B cell (primary cell): ENCODE measurements at regions of chr3 and their contacts with region 1.

Region 1: GRCh38 chr3:32467333-32468070 is 35.1 kb downstream of the CMTM6 start:
- DNase-seq: peak; percentile 87
- ATAC-seq: peak; percentile 78
- H3K4me3 ChIP-seq: peak overlapping the region in 4 of 5 experiments; percentile 49 to 64 (median 58)
- H3K4me3 Mint-ChIP-seq: peak overlapping the region; percentile 77
- H3K27ac ChIP-seq: peak overlapping the region; percentile 70
- H3K27ac Mint-ChIP-seq: peak overlapping the region; percentile 85
- H3K4me1 ChIP-seq: peaks cover 29 to 44% of the 10 kb centered on the region in 2 donors
- H3K4me1 Mint-ChIP-seq: peaks cover 54% of the 10 kb centered on the region
- H3K27me3 ChIP-seq: no peaks in the 10 kb centered on the region
- H3K27me3 Mint-ChIP-seq: no peaks in the 10 kb centered on the region
- CTCF ChIP-seq: peak; percentile 98

Region 2: DNA sequence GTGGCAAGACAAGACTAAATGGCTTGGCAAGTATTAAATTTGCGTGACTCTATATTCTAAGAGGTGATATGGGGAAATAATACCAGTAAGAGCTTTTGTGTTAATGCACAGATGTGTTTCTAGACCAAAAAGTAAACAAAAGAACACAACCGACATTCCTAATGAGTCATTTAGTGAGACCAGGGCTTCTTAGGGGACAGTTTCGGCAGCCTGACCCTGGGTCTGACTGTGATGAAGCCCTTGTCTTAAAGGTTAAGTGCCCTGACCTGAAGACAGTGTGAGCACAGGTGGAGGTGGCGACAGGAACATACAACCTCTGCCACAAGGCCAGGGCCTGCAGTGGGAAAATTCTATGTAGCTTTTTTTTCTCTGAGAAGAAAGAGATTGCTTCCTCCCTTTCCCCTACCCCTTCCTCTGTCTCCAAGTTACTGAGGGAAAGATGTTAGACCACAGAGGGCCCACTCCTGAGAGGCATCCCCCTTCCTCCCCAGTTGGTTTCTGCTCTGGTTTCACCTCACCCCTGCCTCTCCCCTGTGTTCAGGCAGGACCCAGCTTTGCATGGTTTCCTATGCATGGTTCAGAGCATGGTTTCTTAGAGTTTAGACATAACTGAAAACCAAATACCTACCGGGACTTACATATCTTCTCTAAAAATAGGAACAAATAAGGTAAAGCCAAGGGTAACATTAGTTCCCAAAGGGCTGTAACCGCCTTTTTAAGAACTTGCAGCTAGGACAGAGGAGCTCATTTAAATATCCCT is 100.7 kb before region 1 on chr3:
- CTCF ChIA-PET with region 1: interaction called, 238 read pairs
- POLR2A ChIA-PET with region 1: no interaction called
- intact Hi-C with region 1: no loop called
- DNase-seq: no peak
- ATAC-seq: no peak
- H3K4me3 ChIP-seq: no peak overlapping the region
- H3K4me3 Mint-ChIP-seq: no peak overlapping the region
- H3K27ac ChIP-seq: no peak overlapping the region
- H3K27ac Mint-ChIP-seq: no peak overlapping the region
- H3K4me1 ChIP-seq: peaks cover 21 to 25% of the 10 kb centered on the region in 2 donors
- H3K4me1 Mint-ChIP-seq: peaks cover 17% of the 10 kb centered on the region
- H3K27me3 ChIP-seq: peaks cover 0 to 8% (median 0%) of the 10 kb centered on the region in 4 experiments
- H3K27me3 Mint-ChIP-seq: no peaks in the 10 kb centered on the region
- CTCF ChIP-seq: no peak

Region 3: GRCh38 chr3:32391643-32392535 is 75.6 kb before region 1 on chr3 and contains the start of gene CMTM7:
- CTCF ChIA-PET with region 1: interaction called, 37 read pairs
- POLR2A ChIA-PET with region 1: no interaction called
- intact Hi-C with region 1: no loop called
- DNase-seq: peak; percentile 71
- ATAC-seq: peak; percentile 63
- H3K4me3 ChIP-seq: peak within 1 kb of the TSS; percentile 42 to 92 (median 73)
- H3K4me3 Mint-ChIP-seq: peak within 1 kb of the TSS; percentile 96
- H3K27ac ChIP-seq: peak within 1 kb of the TSS; percentile 72 to 82
- H3K27ac Mint-ChIP-seq: peak within 1 kb of the TSS; percentile 97
- H3K4me1 ChIP-seq: peaks cover 28 to 40% of the 10 kb centered on the region in 2 donors
- H3K4me1 Mint-ChIP-seq: peaks cover 52% of the 10 kb centered on the region
- H3K27me3 ChIP-seq: no peaks in the 10 kb centered on the region
- H3K27me3 Mint-ChIP-seq: no peaks in the 10 kb centered on the region
- CTCF ChIP-seq: no peak
- total RNA-seq, gene CMTM7: 68.4 and 71.5 TPM in 2 replicates

Region 4: GRCh38 chr3:32420126-32421038 is 47.1 kb before region 1 on chr3:
- CTCF ChIA-PET with region 1: interaction called, 55 read pairs
- POLR2A ChIA-PET with region 1: no interaction called
- intact Hi-C with region 1: loop called (anchors 1 kb)
- DNase-seq: peak; percentile 80
- ATAC-seq: peak; percentile 77
- H3K4me3 ChIP-seq: peak overlapping the region in 3 of 5 experiments; percentile 2 to 38 (median 11)
- H3K4me3 Mint-ChIP-seq: peak overlapping the region; percentile 84
- H3K27ac ChIP-seq: peak overlapping the region; percentile 79 to 86
- H3K27ac Mint-ChIP-seq: peak overlapping the region; percentile 97
- H3K4me1 ChIP-seq: peaks cover 67 to 73% of the 10 kb centered on the region in 2 donors
- H3K4me1 Mint-ChIP-seq: peaks cover 84% of the 10 kb centered on the region
- H3K27me3 ChIP-seq: no peaks in the 10 kb centered on the region
- H3K27me3 Mint-ChIP-seq: no peaks in the 10 kb centered on the region
- CTCF ChIP-seq: no peak

Region 5: DNA sequence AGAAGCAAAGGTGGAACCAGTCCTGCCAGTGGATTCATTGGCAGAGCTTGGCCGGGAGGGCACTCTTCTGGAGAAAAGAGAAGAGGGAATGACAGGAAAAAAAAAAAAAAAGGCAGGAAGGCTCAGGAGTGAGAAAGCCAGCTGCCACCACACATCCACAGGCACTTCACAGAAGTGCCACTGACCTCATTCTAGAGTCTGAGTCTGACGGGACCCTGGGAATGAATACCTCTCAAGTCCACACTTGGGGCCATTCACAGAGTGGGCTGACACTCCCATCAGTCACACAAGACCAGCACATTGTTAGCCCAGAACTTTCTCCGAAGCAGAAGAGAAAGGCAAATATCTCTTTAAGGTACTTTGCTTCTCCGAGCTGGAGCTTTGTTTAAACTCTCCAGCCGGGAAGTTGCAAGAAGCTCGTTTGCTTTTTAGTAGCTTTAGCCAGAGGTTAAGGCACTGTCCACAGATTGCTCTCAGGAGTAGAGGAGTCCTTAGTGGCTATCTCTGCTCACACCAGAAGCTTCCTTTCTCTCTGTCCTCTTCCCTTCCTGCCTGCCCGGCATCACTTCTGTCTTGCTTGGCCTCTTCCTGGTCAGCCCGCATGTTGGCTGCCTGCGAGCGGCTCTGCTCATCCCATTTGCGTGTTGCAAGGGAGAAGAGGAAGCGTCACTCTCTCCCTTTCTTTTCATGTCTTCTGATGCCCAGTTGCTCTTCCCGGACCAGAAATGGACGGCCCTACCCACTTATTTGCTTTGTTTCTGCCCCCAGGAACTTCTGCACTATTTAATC is 18.6 kb before region 1 on chr3:
- CTCF ChIA-PET with region 1: interaction called, 32 read pairs
- POLR2A ChIA-PET with region 1: no interaction called
- intact Hi-C with region 1: no loop called
- DNase-seq: no peak
- ATAC-seq: no peak
- H3K4me3 ChIP-seq: no peak overlapping the region
- H3K4me3 Mint-ChIP-seq: no peak overlapping the region
- H3K27ac ChIP-seq: no peak overlapping the region
- H3K27ac Mint-ChIP-seq: no peak overlapping the region
- H3K4me1 ChIP-seq: peaks cover 10 to 20% of the 10 kb centered on the region in 2 donors
- H3K4me1 Mint-ChIP-seq: peaks cover 44% of the 10 kb centered on the region
- H3K27me3 ChIP-seq: no peaks in the 10 kb centered on the region
- H3K27me3 Mint-ChIP-seq: no peaks in the 10 kb centered on the region
- CTCF ChIP-seq: no peak

Region 6: DNA sequence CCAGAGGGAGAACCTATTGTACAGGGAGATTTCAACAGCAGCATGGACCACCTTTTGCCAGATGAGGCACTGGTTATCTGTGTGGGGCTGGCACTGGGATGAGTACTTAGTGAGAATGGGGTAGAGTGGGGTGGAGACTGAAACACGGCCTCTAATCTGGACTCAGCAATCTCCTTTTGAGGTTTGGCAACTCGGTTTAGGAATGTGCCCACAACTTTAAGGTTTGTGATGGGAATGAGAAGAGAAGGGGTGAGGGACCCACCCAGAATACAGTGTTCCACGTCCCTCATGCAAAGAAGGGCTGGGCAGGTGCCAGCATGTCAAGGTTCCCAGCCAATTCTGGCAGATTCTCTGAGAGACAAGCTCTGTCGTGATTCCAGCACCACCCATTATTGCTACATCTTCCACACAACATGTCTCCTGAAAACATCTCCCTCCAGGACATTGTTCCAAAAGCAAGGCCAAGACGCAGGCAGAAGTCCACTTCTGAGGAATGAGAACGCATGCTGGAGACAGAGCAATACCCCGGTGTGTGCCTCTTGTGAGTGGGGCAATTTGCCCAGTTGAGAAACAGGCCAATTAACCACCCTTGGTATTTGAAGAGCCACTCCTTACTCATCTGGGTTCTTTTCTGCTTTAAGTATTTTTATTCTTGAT is 446.4 kb after region 1 on chr3:
- CTCF ChIA-PET with region 1: no interaction called
- POLR2A ChIA-PET with region 1: no interaction called
- intact Hi-C with region 1: no loop called
- DNase-seq: no peak
- ATAC-seq: no peak
- H3K4me3 ChIP-seq: no peak overlapping the region
- H3K4me3 Mint-ChIP-seq: no peak overlapping the region
- H3K27ac ChIP-seq: no peak overlapping the region
- H3K27ac Mint-ChIP-seq: no peak overlapping the region
- H3K4me1 ChIP-seq: no peaks in the 10 kb centered on the region
- H3K4me1 Mint-ChIP-seq: no peaks in the 10 kb centered on the region
- H3K27me3 ChIP-seq: no peaks in the 10 kb centered on the region
- H3K27me3 Mint-ChIP-seq: peaks cover 2% of the 10 kb centered on the region
- CTCF ChIP-seq: no peak